Psoas muscle (tissue), 8 donors: ENCODE measurements at regions of chr13 and their contacts with region 1.

Region 1: DNA sequence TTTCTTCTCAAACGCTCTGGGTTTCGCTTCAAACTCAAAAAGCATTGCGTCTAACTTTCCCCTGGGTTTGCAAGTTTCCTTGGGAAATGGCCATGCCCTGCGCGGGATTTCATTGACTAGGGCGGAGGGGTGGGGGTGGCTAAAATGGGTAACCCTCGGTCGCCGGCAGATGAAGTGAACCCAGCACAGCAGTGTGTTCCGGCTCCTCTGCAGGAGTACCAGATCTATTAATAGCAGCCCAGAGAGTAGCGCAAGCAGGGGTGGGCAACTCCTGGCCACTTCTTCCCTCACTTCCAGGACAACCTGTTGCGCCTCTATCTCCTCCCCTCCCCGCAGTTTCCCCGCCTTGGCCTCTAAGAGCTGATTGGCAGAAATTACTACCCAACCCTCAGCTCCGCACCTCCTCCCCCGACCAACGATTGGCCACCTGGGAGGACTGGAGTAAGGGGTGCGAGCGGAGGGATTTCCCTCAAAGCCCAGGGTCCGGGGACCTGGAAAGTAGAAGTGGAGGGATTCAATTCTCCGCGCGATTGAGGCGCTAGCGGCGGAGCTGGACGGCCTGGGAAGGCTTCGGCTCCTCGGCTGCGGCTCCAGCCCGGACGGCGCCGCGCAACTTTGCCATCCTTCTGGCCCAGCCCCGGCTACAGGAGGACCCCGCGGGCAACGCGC is at the start of gene FREM2:
- DNase-seq: peak; percentile 20 to 66
- ATAC-seq: peak; percentile 89 to 95 (median 90)
- H3K4me3 ChIP-seq: peak within 1 kb of the TSS; percentile 89
- H3K27ac ChIP-seq: peak within 1 kb of the TSS; percentile 63
- H3K4me1 ChIP-seq: no peaks in the 10 kb centered on the region
- H3K27me3 ChIP-seq: no peaks in the 10 kb centered on the region
- CTCF ChIP-seq: no peak
- total RNA-seq, gene FREM2: 2.2 to 9.4 (median 3.2) TPM

Region 2: DNA sequence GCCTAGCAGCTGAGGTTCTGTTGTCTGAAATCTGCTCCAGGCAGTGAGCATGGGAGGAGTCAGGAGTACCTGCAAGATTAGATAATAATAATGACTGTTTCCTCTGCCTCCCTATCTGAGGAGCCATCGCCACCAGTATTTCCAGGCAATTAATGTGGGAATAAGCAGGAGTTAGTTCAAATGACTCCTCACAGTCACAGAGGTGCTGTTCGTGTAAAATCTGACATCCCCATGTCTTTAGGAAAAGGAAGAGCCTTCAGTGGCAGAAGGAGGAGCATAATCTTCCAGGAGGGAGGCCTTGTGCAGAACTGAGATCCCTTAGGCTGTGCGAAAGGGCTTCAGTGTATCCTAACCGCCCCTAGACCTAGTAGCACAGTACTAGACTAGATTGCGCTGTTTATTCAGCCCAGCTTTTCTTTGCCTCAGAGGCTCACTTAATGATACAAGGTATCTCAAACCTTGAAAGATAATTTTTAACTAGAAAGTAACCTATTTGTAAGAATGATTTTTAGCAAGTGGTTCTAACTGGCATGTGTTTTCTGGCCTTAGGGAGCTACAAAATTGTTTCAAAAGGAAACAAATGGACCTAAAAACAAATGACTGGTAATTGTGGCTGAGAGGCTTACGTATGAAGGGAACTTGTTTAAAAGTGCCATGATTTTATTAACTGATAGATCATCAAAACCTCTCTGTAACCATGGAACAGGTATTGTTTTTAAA is 49.2 kb after region 1 on chr13:
- intact Hi-C with region 1: no loop called
- DNase-seq: no peak
- ATAC-seq: no peak
- H3K4me3 ChIP-seq: no peak overlapping the region
- H3K27ac ChIP-seq: no peak overlapping the region
- H3K4me1 ChIP-seq: no peaks in the 10 kb centered on the region
- H3K27me3 ChIP-seq: no peaks in the 10 kb centered on the region
- CTCF ChIP-seq: no peak

Region 3: DNA sequence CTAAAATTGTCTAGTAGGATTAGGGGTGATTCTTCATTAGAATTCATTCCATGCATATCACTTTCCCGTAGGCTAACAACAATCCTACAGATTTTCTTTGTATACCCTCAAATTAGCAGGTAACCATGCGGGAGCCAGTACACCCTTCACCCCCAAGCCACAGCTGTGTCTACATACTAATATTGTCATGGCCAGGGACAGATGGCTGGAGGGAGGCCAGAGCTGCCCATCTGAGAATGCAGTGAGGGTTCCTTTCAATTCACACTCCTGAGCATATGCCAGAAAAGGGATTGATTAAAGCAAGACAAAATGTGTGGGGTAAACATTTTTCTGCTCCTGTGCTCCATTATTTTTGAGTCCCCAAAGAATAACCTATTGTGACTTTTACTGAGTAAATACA is 69.1 kb after region 1 on chr13:
- intact Hi-C with region 1: no loop called
- DNase-seq: no peak
- ATAC-seq: no peak
- H3K4me3 ChIP-seq: no peak overlapping the region
- H3K27ac ChIP-seq: no peak overlapping the region
- H3K4me1 ChIP-seq: peaks cover 17% of the 10 kb centered on the region
- H3K27me3 ChIP-seq: no peaks in the 10 kb centered on the region
- CTCF ChIP-seq: no peak

Region 4: GRCh38 chr13:38914070-38914469 is 227.4 kb after region 1 on chr13:
- intact Hi-C with region 1: loop called (anchors 5 to 10 kb)
- DNase-seq: no peak
- ATAC-seq: no peak
- H3K4me3 ChIP-seq: no peak overlapping the region
- H3K27ac ChIP-seq: no peak overlapping the region
- H3K4me1 ChIP-seq: no peaks in the 10 kb centered on the region
- H3K27me3 ChIP-seq: no peaks in the 10 kb centered on the region
- CTCF ChIP-seq: no peak